ENCODE measurements at regions of chr13 and their contacts with region 1.

Region 1: GRCh38 chr13:20182231-20182846 is 10.4 kb downstream of the GJB2 start:
- H3K4me3 Mint-ChIP-seq: no peak overlapping the region
- H3K27ac Mint-ChIP-seq: no peak overlapping the region
- H3K4me1 Mint-ChIP-seq: peaks cover 10% of the 10 kb centered on the region
- H3K27me3 Mint-ChIP-seq: peaks cover 33% of the 10 kb centered on the region

Region 2: GRCh38 chr13:19695829-19696228 is 486.5 kb before region 1 on chr13:
- intact Hi-C with region 1: no loop called
- H3K4me3 Mint-ChIP-seq: no peak overlapping the region
- H3K27ac Mint-ChIP-seq: no peak overlapping the region
- H3K4me1 Mint-ChIP-seq: no peaks in the 10 kb centered on the region
- H3K27me3 Mint-ChIP-seq: no peaks in the 10 kb centered on the region

Region 3: DNA sequence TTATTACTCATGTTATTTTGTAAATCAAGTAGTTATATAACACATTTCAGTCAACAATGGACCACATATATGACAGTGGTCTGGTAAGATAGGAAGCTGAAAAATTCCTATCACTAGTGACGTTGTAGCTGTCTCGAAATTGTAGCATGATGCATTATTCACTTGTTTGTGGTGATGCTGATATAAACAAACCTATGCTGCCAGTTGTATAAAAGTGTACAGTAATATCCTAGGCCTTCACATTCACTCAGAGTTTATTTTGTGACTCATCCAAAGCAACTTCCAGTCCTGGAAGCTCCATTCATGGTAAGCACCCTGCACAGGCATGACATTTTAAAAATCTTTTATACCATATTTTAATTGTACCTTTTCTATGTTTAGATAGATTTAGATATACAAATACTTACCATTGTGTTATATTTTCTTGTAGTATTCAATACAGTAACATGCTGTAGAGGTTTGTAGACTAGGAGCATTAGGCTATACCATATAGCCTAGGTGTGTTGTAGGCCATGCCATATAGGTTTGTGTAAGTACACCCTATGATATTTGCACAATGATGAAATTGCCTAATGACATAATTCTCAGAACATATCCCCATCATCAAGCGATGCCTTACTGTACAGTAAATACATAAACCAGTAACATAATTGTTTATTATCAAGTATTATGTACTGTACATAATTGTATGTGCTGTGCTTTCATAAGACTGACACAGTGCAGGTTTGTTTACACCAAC is 433.9 kb after region 1 on chr13:
- intact Hi-C with region 1: no loop called
- H3K4me3 Mint-ChIP-seq: no peak overlapping the region
- H3K27ac Mint-ChIP-seq: no peak overlapping the region
- H3K4me1 Mint-ChIP-seq: no peaks in the 10 kb centered on the region
- H3K27me3 Mint-ChIP-seq: no peaks in the 10 kb centered on the region

Region 4: DNA sequence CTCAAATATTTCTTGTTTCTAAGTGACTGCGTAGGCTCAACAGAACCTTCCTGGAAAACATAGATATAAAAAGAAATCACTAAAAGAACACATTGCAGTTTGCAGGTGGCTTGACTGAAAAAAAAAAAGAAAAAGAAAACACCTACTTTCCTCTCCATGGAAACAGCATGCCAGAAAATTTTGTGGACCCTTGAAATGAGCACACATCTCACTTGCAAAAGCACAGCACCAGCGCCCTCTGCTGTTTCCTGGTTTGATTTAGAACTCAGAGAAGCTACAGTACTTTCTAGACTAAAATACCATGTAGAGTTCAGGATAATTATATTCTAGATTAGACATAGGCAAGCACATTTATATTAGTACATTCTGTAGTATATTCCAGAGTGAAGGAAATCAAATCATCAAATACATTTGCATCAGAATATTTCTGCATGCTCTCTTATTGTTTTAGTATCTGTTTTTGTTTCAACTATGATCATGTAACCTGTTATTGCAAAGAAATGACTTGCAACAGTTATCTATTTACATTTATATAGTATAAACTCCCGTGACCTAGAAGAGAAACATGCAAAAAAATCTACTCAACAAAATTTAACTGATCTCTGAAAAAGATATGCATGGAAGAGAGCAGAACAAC is 742.5 kb after region 1 on chr13:
- intact Hi-C with region 1: loop called (anchors 2 kb)
- H3K4me3 Mint-ChIP-seq: no peak overlapping the region
- H3K27ac Mint-ChIP-seq: no peak overlapping the region
- H3K4me1 Mint-ChIP-seq: no peaks in the 10 kb centered on the region
- H3K27me3 Mint-ChIP-seq: no peaks in the 10 kb centered on the region

Measured in dendritic cell treated with granulocyte-macrophage colony-stimulating factor and Interleukin-4, amounts not matched to agents 40 ng/mL and 50 ng/mL, for 4 days (primary cell).